PC-9 (cell line): ENCODE measurements at regions of chr1 and their contacts with region 1.

Region 1: GRCh38 chr1:92817986-92818764 is 13.7 kb upstream of the RPL5 start:
- DNase-seq: peak in 1 of 2 experiments; percentile 34
- H3K4me3 ChIP-seq: no peak overlapping the region
- H3K27ac ChIP-seq: peak overlapping the region; percentile 31; the same call in 1 of the 2 replicates
- H3K4me1 ChIP-seq: peaks cover 40% of the 10 kb centered on the region
- H3K27me3 ChIP-seq: no peaks in the 10 kb centered on the region
- CTCF ChIP-seq: peak; percentile 79

Region 2: DNA sequence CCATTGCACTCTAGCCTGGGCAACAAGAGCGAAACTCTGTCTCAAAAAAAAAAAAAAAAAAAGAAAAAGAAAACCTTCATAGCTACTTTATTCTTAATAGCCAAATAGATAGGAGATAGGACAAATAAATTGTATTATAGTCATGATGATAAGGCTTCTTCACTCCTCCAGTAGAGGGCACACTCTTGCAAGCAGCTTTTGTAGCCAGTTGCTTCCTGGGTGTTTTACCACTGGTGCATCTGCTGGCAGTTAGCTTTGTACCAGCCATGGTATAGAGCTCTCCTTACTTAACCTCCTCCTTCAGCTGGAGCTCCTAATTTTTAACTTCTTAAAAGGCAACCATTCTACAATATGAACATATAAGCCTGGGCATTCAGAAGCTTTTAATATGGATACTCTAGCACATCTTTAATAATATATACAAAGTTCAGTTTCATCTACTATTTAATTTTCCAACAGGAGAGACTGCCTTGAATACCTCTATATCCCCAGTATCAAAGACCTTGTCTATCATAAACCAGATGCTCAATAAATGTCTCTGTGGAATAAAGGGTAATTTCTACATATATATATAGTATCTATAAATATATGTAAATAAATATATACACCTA is 69.0 kb before region 1 on chr1:
- CTCF ChIA-PET with region 1: interaction called, 10 read pairs
- POLR2A ChIA-PET with region 1: interaction called, 5 read pairs
- intact Hi-C with region 1: no loop called
- DNase-seq: peak; percentile 21 to 59
- H3K4me3 ChIP-seq: no peak overlapping the region
- H3K27ac ChIP-seq: no peak overlapping the region
- H3K4me1 ChIP-seq: peaks cover 11% of the 10 kb centered on the region
- H3K27me3 ChIP-seq: no peaks in the 10 kb centered on the region
- CTCF ChIP-seq: peak; percentile 86